SK-N-SH (cell line): ENCODE measurements at regions of chr22 and their contacts with region 1.

Region 1: GRCh38 chr22:31272522-31273446 is 19.5 kb downstream of the PIK3IP1 start:
- DNase-seq: peak; percentile 79
- H3K4me3 ChIP-seq: no peak overlapping the region
- H3K27ac ChIP-seq: peak overlapping the region; percentile 17 to 30; a peak in 3 of 4 replicates
- H3K4me1 ChIP-seq: no peaks in the 10 kb centered on the region; a peak in 1 of 4 replicates
- H3K27me3 ChIP-seq: no peaks in the 10 kb centered on the region
- CTCF ChIP-seq: peak; percentile 78
- EP300 ChIP-seq: no peak
- RAD21 ChIP-seq: peak; percentile 87

Region 2: DNA sequence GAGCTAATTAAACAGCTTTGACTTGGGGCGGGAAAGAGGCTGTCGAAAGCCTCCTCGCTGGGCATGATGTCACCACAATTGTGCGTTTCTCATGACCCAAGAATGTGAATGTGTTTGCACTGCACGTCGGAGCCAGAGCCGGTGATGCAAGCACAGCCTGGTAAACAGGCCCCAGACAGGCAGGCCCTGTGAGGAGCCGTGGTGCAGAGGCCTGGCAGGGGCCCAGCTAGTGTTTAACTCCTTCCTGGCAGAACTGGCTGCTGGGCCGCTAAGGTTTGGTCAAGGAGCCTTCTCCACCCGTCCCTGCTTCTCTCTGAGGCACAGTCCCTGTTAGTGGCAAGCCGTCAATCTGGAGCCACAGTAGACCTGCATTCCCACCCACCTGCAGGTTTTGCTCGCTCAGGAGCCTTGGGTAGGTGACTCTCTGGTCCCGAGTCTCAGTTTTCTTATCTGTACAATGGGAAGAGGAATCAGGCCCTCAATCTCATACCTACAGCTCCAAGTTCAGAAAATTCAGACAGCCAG is 217.1 kb before region 1 on chr22:
- CTCF ChIA-PET with region 1: no interaction called
- POLR2A ChIA-PET with region 1: no interaction called
- DNase-seq: peak; percentile 69
- H3K4me3 ChIP-seq: no peak overlapping the region
- H3K27ac ChIP-seq: peak overlapping the region in 1 of 2 experiments; percentile 53; a peak in 2 of 4 replicates
- H3K4me1 ChIP-seq: peaks cover 5 to 9% of the 10 kb centered on the region in 2 experiments; a peak in 2 of 4 replicates
- H3K27me3 ChIP-seq: no peaks in the 10 kb centered on the region
- CTCF ChIP-seq: no peak
- EP300 ChIP-seq: no peak
- RAD21 ChIP-seq: no peak

Region 3: DNA sequence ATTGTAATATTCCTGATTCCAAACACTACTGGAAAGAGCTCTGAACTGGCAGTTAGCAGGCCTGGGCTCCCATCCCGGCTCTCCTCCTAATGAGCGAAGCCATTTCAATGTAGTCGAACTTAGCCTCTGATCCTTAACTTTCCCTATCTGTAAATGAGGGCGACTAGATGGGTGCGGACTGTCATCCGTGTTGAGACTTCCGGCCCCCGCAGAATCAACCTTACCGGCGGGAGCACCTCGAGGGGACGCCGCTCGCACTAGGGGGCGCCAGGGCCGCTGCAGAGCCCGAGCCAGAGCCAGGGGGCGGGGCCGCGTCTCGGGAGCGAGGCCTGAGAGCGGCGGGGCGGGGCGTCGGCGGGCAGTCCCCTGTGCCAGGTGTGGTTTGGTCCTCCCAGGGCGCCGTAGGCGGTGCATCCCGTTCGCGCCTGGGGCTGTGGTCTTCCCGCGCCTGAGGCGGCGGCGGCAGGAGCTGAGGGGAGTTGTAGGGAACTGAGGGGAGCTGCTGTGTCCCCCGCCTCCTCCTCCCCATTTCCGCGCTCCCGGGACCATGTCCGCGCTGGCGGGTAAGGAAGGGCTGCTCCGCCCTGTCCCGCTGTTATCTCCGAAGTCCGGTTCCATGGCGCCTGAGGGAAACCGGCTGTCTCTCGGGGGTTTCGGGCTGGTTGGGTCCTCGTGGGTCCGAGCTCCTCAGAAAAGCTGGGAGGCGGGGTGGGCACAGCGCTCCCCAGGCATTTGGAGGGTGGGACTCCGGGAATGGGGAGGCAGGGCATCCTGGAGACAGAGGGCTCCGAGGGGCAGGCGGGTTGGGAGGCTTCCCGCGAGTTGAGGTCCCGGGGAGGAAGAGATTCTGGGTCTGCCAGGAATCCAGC is 60.7 kb before region 1 on chr22 and contains the start of gene LIMK2:
- CTCF ChIA-PET with region 1: interaction called, 151 read pairs
- POLR2A ChIA-PET with region 1: no interaction called
- DNase-seq: peak; percentile 97
- H3K4me3 ChIP-seq: peak within 1 kb of the TSS; percentile 58 to 84
- H3K27ac ChIP-seq: peak within 1 kb of the TSS; percentile 24 to 48; a peak in 2 of 4 replicates
- H3K4me1 ChIP-seq: peaks cover 0 to 11% of the 10 kb centered on the region in 2 experiments; a peak in 2 of 4 replicates
- H3K27me3 ChIP-seq: no peaks in the 10 kb centered on the region
- CTCF ChIP-seq: peak; percentile 91
- EP300 ChIP-seq: peak in 1 of 2 experiments; percentile 39; a peak in 1 of 4 replicates
- RAD21 ChIP-seq: peak; percentile 74
- polyA plus RNA-seq, gene LIMK2: 9.8 and 10.7 TPM in 2 replicates

Region 4: GRCh38 chr22:31223786-31224191 is 49.0 kb before region 1 on chr22:
- CTCF ChIA-PET with region 1: interaction called, 26 read pairs
- POLR2A ChIA-PET with region 1: no interaction called
- DNase-seq: no peak
- H3K4me3 ChIP-seq: no peak overlapping the region
- H3K27ac ChIP-seq: no peak overlapping the region
- H3K4me1 ChIP-seq: peaks cover 0 to 5% of the 10 kb centered on the region in 2 experiments; a peak in 1 of 4 replicates
- H3K27me3 ChIP-seq: no peaks in the 10 kb centered on the region
- CTCF ChIP-seq: no peak
- EP300 ChIP-seq: no peak
- RAD21 ChIP-seq: no peak

Region 5: DNA sequence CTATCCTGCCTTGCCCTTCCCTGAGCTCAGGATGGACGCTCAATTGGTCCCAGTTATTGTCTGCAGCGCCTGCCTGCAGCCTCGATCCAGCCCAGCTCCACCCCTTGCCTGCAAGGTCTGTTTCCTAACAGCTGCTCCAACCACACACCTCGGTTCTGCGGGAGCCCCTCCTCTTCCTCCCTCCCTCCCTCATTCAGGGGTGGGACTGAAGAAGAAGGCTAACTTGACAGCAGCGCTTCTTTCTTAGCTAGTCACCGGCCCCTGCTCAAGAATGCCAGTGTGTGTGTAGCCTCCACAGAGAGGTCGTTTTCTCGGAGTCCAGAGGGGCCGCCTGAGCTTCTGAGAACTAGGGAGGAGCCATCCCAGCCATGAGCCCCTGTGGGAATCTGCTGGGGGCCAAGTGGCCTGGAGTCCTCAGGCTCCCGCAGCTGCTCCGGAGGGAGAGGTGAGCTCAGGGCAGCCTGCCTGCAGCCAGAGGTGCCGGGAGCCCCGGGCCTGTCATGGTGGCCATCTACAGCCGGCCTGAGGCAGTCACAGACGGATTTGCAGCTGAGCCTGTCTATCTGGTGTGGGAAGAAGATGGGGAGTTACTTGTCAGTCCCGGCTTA is 24.5 kb before region 1 on chr22:
- CTCF ChIA-PET with region 1: interaction called, 85 read pairs
- POLR2A ChIA-PET with region 1: interaction called, 3 read pairs
- DNase-seq: peak; percentile 85
- H3K4me3 ChIP-seq: peak overlapping the region; percentile 73 to 80
- H3K27ac ChIP-seq: peak overlapping the region; percentile 61 to 88
- H3K4me1 ChIP-seq: peaks cover 15 to 63% of the 10 kb centered on the region in 2 experiments
- H3K27me3 ChIP-seq: no peaks in the 10 kb centered on the region
- CTCF ChIP-seq: no peak
- EP300 ChIP-seq: no peak
- RAD21 ChIP-seq: no peak

Region 6: DNA sequence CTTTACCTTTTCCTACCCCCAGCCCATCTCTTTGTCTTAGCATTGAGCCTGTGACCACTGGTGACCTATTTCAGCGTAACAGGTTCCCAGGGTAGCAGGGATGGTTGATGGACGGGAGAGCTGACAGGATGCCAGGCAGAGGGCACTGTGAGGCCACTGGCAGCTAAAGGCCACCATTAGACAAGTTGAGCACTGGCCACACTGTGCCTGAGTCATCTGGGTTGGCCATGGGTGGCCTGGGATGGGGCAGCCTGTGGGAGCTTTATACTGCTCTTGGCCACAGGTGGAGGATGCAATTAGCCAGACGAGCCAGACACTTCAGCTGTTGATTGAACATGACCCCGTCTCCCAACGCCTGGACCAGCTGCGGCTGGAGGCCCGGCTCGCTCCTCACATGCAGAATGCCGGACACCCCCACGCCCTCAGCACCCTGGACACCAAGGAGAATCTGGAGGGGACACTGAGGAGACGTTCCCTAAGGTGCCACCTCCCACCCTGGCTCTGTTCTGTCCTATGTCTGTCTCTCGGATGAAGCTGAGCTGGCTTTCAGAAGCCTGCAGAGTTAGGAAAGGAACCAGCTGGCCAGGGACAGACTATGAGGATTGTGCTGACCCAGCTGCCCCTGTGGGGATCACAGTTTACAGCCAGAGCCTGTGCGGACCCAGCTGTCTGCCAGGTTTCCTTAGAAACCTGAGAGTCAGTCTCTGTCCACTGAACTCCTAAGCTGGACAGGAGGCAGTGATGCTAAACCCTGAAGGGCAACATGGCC is 10.3 kb before region 1 on chr22:
- CTCF ChIA-PET with region 1: interaction called, 64 read pairs
- POLR2A ChIA-PET with region 1: no interaction called
- DNase-seq: no peak
- H3K4me3 ChIP-seq: no peak overlapping the region
- H3K27ac ChIP-seq: peak overlapping the region in 1 of 2 experiments; percentile 44; a peak in 1 of 4 replicates
- H3K4me1 ChIP-seq: peaks cover 0 to 14% of the 10 kb centered on the region in 2 experiments; a peak in 1 of 4 replicates
- H3K27me3 ChIP-seq: no peaks in the 10 kb centered on the region
- CTCF ChIP-seq: no peak
- EP300 ChIP-seq: no peak
- RAD21 ChIP-seq: no peak

Region 7: DNA sequence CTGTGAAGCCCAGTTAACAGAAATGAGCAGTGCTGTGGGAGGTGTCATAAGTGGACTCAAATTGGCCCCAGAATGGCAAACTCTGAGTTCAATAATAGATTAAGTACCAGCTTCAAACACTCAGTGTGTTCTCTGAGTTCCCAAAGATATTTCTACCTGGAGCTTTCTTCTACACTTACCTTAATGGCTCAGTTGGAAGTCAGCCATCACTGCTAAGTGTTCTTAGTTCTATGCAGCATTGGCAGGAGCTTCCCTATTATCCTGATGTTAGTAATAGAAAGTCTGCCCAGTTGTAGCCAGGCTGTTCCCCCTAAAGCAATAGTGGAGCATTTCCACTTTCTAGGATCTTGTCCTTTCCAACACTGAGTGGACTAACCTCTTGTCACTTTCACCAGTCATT is 29.2 kb after region 1 on chr22:
- CTCF ChIA-PET with region 1: interaction called, 10 read pairs
- POLR2A ChIA-PET with region 1: no interaction called
- DNase-seq: no peak
- H3K4me3 ChIP-seq: no peak overlapping the region
- H3K27ac ChIP-seq: no peak overlapping the region
- H3K4me1 ChIP-seq: no peaks in the 10 kb centered on the region; a peak in 1 of 4 replicates
- H3K27me3 ChIP-seq: no peaks in the 10 kb centered on the region
- CTCF ChIP-seq: no peak
- EP300 ChIP-seq: no peak
- RAD21 ChIP-seq: no peak